OCI-LY7 (cell line): ENCODE measurements at regions of chr7 and their contacts with region 1.

Region 1: GRCh38 chr7:158689488-158689887 is 15.1 kb downstream of the NCAPG2 start:
- DNase-seq: no peak
- H3K4me3 ChIP-seq: no peak overlapping the region
- H3K27ac ChIP-seq: no peak overlapping the region
- H3K4me1 ChIP-seq: no peaks in the 10 kb centered on the region
- CTCF ChIP-seq: no peak

Region 2: DNA sequence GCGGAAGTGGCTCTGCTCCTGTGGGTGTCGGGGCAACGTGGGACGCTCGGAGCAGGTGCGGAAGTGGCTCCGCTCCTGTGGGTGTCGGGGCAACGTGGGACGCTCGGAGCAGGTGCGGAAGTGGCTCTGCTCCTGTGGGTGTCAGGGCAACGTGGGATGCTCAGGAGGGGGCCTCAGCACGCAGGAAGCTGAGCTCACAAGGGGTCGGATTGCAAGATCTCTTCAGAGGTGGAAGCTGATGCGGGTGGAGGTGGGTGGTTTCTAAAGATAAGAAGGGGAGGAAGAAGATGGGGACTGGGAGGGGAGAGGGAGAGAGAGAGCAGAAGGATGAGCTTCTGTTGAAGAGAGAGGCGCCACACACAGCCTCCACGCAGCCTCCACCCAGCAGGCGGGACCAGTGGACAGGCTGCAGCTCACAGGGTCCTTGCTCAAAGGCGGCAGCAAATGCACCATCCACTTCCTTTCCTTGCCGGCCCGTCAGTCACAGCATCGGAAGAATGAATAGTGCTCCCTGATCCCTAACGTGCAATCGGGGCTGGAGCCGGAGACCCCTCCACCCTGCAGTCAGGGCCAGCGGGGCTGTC is 180.6 kb before region 1 on chr7:
- CTCF ChIA-PET with region 1: no interaction called
- POLR2A ChIA-PET with region 1: no interaction called
- intact Hi-C with region 1: no loop called
- DNase-seq: no peak
- H3K4me3 ChIP-seq: no peak overlapping the region
- H3K27ac ChIP-seq: no peak overlapping the region
- H3K4me1 ChIP-seq: no peaks in the 10 kb centered on the region
- CTCF ChIP-seq: no peak

Region 3: DNA sequence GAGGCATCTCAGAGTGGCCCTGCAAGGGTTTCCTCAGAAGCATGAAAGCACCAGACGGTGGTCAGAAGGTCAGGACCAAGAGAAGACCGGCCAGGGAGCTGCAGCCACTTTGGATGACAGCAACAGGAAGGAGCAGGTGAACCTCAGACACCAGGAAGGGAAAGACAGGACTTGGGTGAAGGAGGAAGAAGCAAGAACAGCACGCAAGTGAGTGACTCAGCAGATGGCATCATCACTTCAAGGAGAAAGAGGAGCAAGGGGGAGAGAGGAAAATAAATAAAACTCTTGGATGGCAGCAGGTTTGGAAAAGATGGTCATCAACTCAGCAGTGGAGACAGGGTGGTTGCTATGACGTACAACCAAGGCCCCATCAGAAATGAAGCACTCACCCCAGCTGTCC is 16.5 kb before region 1 on chr7:
- CTCF ChIA-PET with region 1: no interaction called
- POLR2A ChIA-PET with region 1: interaction called, 14 read pairs
- intact Hi-C with region 1: no loop called
- DNase-seq: no peak
- H3K4me3 ChIP-seq: no peak overlapping the region
- H3K27ac ChIP-seq: no peak overlapping the region
- H3K4me1 ChIP-seq: no peaks in the 10 kb centered on the region
- CTCF ChIP-seq: no peak